ENCODE measurements at regions of chr1 and their contacts with region 1.

Region 1: GRCh38 chr1:231603598-231604275 is 22.9 kb upstream of the DISC1 start:
- DNase-seq: peak; percentile 13 to 72 (median 67)
- ATAC-seq: peak; percentile 87
- H3K4me3 ChIP-seq: peak overlapping the region; percentile 67
- H3K4me3 Mint-ChIP-seq: peak overlapping the region; percentile 77 to 98 (median 94)
- H3K27ac ChIP-seq: peak overlapping the region; percentile 70
- H3K27ac Mint-ChIP-seq: peak overlapping the region; percentile 79 to 96 (median 87)
- H3K4me1 ChIP-seq: no peaks in the 10 kb centered on the region
- H3K4me1 Mint-ChIP-seq: peaks cover 8 to 19% (median 11%) of the 10 kb centered on the region in 7 donors
- H3K27me3 ChIP-seq: no peaks in the 10 kb centered on the region
- H3K27me3 Mint-ChIP-seq: peaks cover 0 to 18% (median 0%) of the 10 kb centered on the region in 5 donors

Region 2: GRCh38 chr1:230375780-230376179 is 1228.0 kb before region 1 on chr1:
- CTCF ChIA-PET with region 1: no interaction called
- POLR2A ChIA-PET with region 1: no interaction called
- intact Hi-C with region 1: no loop called
- DNase-seq: no peak
- ATAC-seq: no peak
- H3K4me3 ChIP-seq: no peak overlapping the region
- H3K4me3 Mint-ChIP-seq: no peak overlapping the region
- H3K27ac ChIP-seq: no peak overlapping the region
- H3K27ac Mint-ChIP-seq: no peak overlapping the region
- H3K4me1 ChIP-seq: no peaks in the 10 kb centered on the region
- H3K4me1 Mint-ChIP-seq: no peaks in the 10 kb centered on the region
- H3K27me3 ChIP-seq: no peaks in the 10 kb centered on the region
- H3K27me3 Mint-ChIP-seq: peaks cover 0 to 15% (median 9%) of the 10 kb centered on the region in 5 donors

Region 3: GRCh38 chr1:231040019-231040799 is 563.5 kb before region 1 on chr1 and contains the start of gene FAM89A:
- CTCF ChIA-PET with region 1: no interaction called
- POLR2A ChIA-PET with region 1: no interaction called
- intact Hi-C with region 1: loop called in 1 of 2 experiments (anchors 10 kb)
- DNase-seq: peak; percentile 44 to 79 (median 70)
- ATAC-seq: peak; percentile 91
- H3K4me3 ChIP-seq: peak within 1 kb of the TSS; percentile 67
- H3K4me3 Mint-ChIP-seq: peak within 1 kb of the TSS; percentile 81 to 90 (median 82)
- H3K27ac ChIP-seq: peak within 1 kb of the TSS; percentile 63
- H3K27ac Mint-ChIP-seq: peak within 1 kb of the TSS in 8 of 9 donors; percentile 36 to 83 (median 69)
- H3K4me1 ChIP-seq: peaks cover 10 to 13% of the 10 kb centered on the region in 2 donors
- H3K4me1 Mint-ChIP-seq: peaks cover 27 to 49% (median 36%) of the 10 kb centered on the region in 7 donors
- H3K27me3 ChIP-seq: no peaks in the 10 kb centered on the region
- H3K27me3 Mint-ChIP-seq: peaks cover 0 to 37% (median 0%) of the 10 kb centered on the region in 5 donors
- total RNA-seq, gene FAM89A: 4.5 to 9.0 (median 6.9) TPM

Region 4: GRCh38 chr1:231272880-231273279 is 330.9 kb before region 1 on chr1:
- CTCF ChIA-PET with region 1: no interaction called
- POLR2A ChIA-PET with region 1: no interaction called
- intact Hi-C with region 1: loop called in 1 of 2 experiments (anchors 5 kb)
- DNase-seq: peak in 1 of 9 donors; percentile 33
- ATAC-seq: no peak
- H3K4me3 ChIP-seq: no peak overlapping the region
- H3K4me3 Mint-ChIP-seq: peak overlapping the region in 7 of 10 donors; percentile 28 to 81 (median 60)
- H3K27ac ChIP-seq: no peak overlapping the region
- H3K27ac Mint-ChIP-seq: peak overlapping the region; percentile 28 to 99 (median 93)
- H3K4me1 ChIP-seq: peaks cover 0 to 3% of the 10 kb centered on the region in 2 donors
- H3K4me1 Mint-ChIP-seq: peaks cover 6 to 52% (median 24%) of the 10 kb centered on the region in 7 donors
- H3K27me3 ChIP-seq: no peaks in the 10 kb centered on the region
- H3K27me3 Mint-ChIP-seq: no peaks in the 10 kb centered on the region

Region 5: DNA sequence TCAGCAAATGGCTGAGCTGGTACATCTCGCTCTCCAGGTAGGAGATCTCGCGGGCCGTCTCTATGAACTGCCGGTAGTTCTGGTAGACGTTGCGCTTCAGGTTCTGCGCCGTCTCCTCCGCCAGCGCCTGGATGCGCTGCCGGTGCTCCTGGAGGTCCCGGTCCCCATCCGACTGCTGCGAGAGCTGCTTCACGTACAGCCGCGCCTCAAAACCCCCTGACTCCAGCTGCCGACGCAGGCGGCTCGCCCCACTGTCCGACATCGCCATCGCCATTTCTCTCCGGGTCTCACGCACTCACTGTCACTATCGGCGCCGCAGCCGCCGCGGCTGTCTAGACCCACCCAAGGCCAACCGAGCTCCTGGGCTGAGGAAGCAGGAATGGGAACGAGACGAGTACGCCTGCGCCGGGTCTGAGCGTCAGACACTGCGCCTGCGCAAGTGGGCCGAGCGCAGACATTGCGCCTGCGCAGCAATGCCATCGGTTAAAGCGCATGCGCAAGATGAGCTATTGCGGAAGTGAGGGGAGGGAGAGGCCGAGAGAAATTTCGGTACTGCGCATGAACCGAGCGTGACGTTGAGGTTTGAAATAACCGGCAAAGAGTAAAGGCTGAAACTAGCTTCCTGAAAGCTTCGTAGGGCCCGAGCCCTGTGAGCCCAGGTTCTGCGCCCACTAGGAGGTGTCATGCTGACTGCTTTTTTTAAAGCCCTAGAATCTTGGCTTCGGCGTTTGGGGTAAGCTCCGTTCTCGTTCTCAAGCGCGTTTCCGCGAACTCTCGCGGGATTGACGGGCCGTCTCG is 266.1 kb before region 1 on chr1 and contains the start of gene EXOC8:
- CTCF ChIA-PET with region 1: interaction called, 3 read pairs
- POLR2A ChIA-PET with region 1: interaction called, 3 read pairs
- intact Hi-C with region 1: loop called in 1 of 2 experiments (anchors 1 kb)
- DNase-seq: peak; percentile 95 to 100 (median 98)
- ATAC-seq: peak; percentile 86
- H3K4me3 ChIP-seq: peak within 1 kb of the TSS; percentile 99
- H3K4me3 Mint-ChIP-seq: peak within 1 kb of the TSS; percentile 97 to 100 (median 99)
- H3K27ac ChIP-seq: peak within 1 kb of the TSS; percentile 94
- H3K27ac Mint-ChIP-seq: peak within 1 kb of the TSS; percentile 96 to 100 (median 100)
- H3K4me1 ChIP-seq: peaks cover 41 to 51% of the 10 kb centered on the region in 2 donors
- H3K4me1 Mint-ChIP-seq: peaks cover 36 to 83% (median 67%) of the 10 kb centered on the region in 7 donors
- H3K27me3 ChIP-seq: no peaks in the 10 kb centered on the region
- H3K27me3 Mint-ChIP-seq: peaks cover 0 to 6% (median 0%) of the 10 kb centered on the region in 5 donors
- total RNA-seq, gene EXOC8: 21.9 to 33.8 (median 28.0) TPM

Region 6: DNA sequence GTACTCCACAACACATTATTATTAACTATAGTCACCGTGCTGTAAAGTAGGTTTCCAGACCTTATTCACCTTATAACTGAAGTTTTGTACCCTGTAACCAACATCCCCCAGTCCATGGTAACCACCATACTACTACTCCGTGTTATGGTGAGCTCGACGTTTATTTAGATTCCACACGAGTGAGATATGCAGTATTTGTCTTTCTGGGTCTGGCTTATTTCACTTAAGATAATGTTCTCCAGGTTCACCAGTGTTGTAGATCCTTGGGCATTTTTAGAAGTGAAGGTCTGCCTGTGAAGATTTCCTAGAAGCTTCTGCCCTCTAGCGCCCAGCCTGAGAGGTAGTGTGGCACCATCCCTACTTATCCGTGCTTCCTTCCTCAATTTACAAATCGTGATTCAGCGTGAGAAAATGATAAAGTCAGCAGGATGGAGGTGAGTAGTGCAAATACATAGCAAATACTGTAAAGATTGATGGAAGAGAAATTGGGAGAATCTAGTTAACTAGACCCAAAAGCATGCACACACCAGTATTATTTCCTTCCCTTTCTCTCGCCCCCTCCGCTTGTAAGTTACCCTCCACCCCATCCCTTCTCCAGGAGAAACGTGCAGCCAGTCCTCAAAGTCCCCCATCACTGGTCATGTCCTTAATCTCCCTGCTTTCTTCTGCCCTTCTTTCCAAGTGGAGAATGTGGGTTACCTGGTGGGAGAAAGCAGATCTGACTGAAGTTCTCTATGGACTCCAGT is 13.1 kb before region 1 on chr1:
- CTCF ChIA-PET with region 1: no interaction called
- POLR2A ChIA-PET with region 1: no interaction called
- intact Hi-C with region 1: loop called in 1 of 2 experiments (anchors 1 kb)
- DNase-seq: peak in 5 of 9 donors; percentile 24 to 43 (median 31)
- ATAC-seq: peak; percentile 83
- H3K4me3 ChIP-seq: no peak overlapping the region
- H3K4me3 Mint-ChIP-seq: no peak overlapping the region
- H3K27ac ChIP-seq: no peak overlapping the region
- H3K27ac Mint-ChIP-seq: no peak overlapping the region
- H3K4me1 ChIP-seq: no peaks in the 10 kb centered on the region
- H3K4me1 Mint-ChIP-seq: peaks cover 3 to 10% (median 6%) of the 10 kb centered on the region in 7 donors
- H3K27me3 ChIP-seq: no peaks in the 10 kb centered on the region
- H3K27me3 Mint-ChIP-seq: peaks cover 0 to 6% (median 0%) of the 10 kb centered on the region in 5 donors

Measured in naive thymus-derived CD4-positive, alpha-beta T cell (primary cell).